B cell (primary cell): ENCODE measurements at regions of chr13 and their contacts with region 1.

Region 1: GRCh38 chr13:42478531-42479156 is 95.3 kb upstream of the TNFSF11 start:
- DNase-seq: peak; percentile 17
- ATAC-seq: no peak
- H3K4me3 ChIP-seq: no peak overlapping the region
- H3K4me3 Mint-ChIP-seq: no peak overlapping the region
- H3K27ac ChIP-seq: no peak overlapping the region
- H3K27ac Mint-ChIP-seq: no peak overlapping the region
- H3K4me1 ChIP-seq: no peaks in the 10 kb centered on the region
- H3K4me1 Mint-ChIP-seq: no peaks in the 10 kb centered on the region
- H3K27me3 ChIP-seq: no peaks in the 10 kb centered on the region
- H3K27me3 Mint-ChIP-seq: no peaks in the 10 kb centered on the region
- CTCF ChIP-seq: no peak

Region 2: DNA sequence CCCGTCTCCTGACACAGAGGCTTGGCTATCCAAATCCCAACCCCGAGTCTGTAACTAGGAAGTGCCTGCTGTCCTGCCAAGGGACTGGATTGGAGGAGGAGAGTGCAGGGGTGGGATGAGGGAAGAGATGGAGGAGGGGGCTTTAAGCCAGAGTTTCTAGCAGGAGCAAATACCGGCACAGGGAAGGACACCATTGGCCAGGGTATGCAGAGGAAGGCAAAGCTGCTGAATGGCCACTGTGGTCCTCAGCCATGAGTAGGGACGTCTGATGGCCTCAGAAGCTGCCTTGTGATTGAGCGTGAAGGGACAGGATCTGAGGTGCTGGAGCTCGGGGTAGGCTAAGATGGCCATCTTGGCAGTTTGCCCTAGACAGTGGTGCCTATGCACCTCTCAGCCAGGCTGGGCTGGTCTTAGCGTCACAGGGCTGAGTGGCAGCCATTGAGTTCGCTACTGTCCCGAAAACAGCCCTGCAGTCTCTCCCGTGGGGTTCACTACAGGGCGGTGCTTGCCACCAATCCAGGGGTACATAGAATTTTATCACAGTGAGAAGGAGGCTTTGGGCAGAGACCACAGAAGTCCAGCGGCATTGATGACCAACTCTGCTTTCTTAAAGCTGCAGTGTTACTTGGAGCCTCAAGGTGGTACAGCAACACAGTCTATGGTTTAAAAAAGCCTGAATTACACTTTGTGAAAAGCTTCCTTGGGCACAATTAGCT is 144.9 kb before region 1 on chr13:
- CTCF ChIA-PET with region 1: interaction called, 24 read pairs
- POLR2A ChIA-PET with region 1: no interaction called
- intact Hi-C with region 1: loop called (anchors 1 kb)
- DNase-seq: peak; percentile 55
- ATAC-seq: peak; percentile 57
- H3K4me3 ChIP-seq: no peak overlapping the region
- H3K4me3 Mint-ChIP-seq: no peak overlapping the region
- H3K27ac ChIP-seq: no peak overlapping the region
- H3K27ac Mint-ChIP-seq: no peak overlapping the region
- H3K4me1 ChIP-seq: peaks cover 10 to 16% of the 10 kb centered on the region in 2 donors
- H3K4me1 Mint-ChIP-seq: peaks cover 19% of the 10 kb centered on the region
- H3K27me3 ChIP-seq: no peaks in the 10 kb centered on the region
- H3K27me3 Mint-ChIP-seq: no peaks in the 10 kb centered on the region
- CTCF ChIP-seq: peak; percentile 61